WTC11 (cell line): ENCODE measurements at regions of chr3 and their contacts with region 1.

Region 1: GRCh38 chr3:36560685-36561084 is 180.4 kb downstream of the STAC start:
- DNase-seq: no peak
- ATAC-seq: no peak
- H3K4me3 Mint-ChIP-seq: no peak overlapping the region
- H3K27ac Mint-ChIP-seq: no peak overlapping the region
- H3K4me1 Mint-ChIP-seq: no peaks in the 10 kb centered on the region
- H3K27me3 Mint-ChIP-seq: no peaks in the 10 kb centered on the region
- CTCF ChIP-seq: no peak

Region 2: DNA sequence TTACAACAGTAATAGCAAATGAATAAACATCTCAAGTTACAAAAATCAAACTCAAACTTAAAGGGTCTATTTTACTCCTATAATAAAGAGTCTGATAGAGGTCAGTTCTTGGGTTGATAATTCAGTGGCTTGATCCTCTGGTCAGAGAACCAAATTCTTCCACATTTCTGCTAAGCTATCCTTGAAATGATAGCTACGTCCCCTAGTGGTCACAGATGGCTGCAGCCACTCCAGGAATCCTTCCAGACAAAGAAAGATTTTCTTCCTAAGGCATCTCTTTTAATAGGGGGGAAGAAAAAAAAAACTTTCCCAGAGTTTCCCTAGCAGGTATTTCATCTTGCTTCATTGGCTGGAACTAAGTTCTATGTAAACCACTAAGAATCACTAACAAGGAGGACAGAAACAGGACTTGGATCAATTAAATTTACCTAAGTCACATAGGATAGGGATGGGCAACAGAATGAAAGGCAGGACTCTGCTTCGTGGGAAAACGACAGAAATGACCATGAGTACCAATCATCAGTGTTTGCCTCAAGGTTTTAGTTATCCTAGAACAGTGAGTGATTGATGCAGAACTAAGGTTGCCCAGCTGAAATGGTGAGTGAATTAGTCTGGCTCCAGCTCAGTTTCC is 19.7 kb before region 1 on chr3:
- CTCF ChIA-PET with region 1: interaction called, 12 read pairs
- POLR2A ChIA-PET with region 1: no interaction called
- DNase-seq: peak; percentile 58
- ATAC-seq: peak; percentile 86
- H3K4me3 Mint-ChIP-seq: no peak overlapping the region
- H3K27ac Mint-ChIP-seq: no peak overlapping the region
- H3K4me1 Mint-ChIP-seq: no peaks in the 10 kb centered on the region
- H3K27me3 Mint-ChIP-seq: no peaks in the 10 kb centered on the region
- CTCF ChIP-seq: peak; percentile 74

Region 3: DNA sequence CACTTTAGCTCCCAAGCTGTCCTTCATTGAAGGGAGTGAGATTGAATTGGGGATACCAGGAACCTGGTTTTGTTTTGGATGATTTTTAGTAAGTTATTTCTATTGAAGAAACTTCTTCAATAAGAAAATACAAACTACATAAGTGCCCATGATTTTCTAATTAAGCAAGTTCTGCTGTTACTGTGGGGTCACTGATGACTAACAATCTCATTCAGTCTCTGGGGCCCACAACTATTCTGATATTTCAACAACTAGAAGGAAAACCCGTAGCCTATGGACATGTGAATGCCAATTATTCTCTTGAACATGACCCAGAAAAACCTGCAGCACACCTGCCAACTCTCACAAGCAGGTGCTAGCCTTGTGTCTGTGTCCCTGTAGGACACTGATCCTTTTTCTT is 19.1 kb after region 1 on chr3:
- CTCF ChIA-PET with region 1: no interaction called
- POLR2A ChIA-PET with region 1: interaction called, 13 read pairs
- DNase-seq: no peak
- ATAC-seq: no peak
- H3K4me3 Mint-ChIP-seq: no peak overlapping the region
- H3K27ac Mint-ChIP-seq: no peak overlapping the region
- H3K4me1 Mint-ChIP-seq: no peaks in the 10 kb centered on the region
- H3K27me3 Mint-ChIP-seq: peaks cover 9% of the 10 kb centered on the region
- CTCF ChIP-seq: no peak